Dendritic cell treated with granulocyte-macrophage colony-stimulating factor and Interleukin-4, amounts not matched to agents 40 ng/mL and 50 ng/mL, for 4 days (primary cell): ENCODE measurements at regions of chr7 and their contacts with region 1.

Region 1: DNA sequence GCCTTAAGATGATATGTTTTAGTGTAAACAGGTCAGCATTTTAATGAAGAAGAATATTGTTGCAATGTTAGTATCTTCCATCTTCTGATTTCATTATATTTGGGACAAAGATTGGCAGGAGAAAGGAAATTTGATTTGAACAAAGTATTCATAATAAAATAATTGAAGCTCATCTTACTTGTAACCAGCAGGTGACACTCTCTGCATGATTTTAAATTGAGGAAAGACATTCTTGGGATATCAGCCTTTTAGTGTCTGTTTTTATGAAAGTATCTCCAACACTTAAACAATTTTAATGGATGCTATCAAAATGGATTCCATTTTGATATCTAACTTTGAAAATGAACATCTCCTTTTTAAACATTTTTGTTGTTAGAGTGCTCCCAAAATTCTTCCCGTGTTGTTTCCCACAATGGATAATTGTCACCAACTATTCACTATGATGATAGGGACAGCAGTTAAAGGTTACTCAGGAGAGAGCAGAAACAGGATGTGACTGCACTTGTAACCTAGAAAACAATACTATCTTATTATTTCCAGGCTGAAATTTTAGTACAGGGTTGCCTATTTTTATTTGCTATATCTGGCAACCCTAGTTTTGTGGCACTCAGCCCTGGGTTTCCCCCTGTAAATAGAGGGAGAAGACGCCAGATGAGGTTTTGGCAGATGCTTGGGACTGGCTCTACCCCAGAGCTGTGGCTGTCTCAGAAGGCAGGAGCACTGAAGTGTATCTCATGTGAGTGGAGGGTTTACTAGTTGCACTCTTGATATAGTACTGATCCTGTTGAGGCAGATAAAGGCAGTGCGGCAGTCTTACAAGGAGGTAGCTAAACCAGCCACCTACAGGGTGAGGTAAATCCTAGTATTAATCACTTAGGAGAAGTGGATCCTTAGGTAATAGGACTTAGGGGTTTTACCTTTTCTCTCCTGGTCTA is 31.0 kb upstream of the ABCB4 start:
- H3K4me3 Mint-ChIP-seq: no peak overlapping the region
- H3K27ac Mint-ChIP-seq: no peak overlapping the region
- H3K4me1 Mint-ChIP-seq: peaks cover 5% of the 10 kb centered on the region
- H3K27me3 Mint-ChIP-seq: no peaks in the 10 kb centered on the region

Region 2: DNA sequence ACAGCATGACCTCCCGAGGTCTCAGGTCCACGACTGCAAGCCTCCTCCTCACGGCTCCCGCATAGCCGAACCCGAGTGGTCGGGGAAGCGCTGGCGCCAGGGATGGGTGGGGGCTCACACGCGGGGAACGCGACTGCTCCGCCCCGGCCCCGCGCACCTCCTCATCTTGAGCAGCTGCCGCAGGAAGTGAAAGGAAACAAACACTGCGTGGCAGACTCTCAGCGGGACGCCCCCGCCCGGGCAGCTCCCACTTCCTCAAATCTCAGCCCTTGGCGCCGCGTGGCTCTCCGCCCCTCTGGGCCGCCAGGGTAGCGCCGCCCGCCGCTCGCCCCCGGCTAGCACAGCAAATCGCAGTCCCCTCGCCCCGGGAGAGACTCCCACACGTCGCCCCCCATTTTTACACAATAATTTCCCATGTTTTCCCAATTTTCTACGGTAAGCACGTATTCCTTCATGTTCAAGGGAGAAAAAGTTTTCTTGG is 286.9 kb before region 1 on chr7 and contains the start of gene TMEM243:
- intact Hi-C with region 1: no loop called
- H3K4me3 Mint-ChIP-seq: peak within 1 kb of the TSS; percentile 90
- H3K27ac Mint-ChIP-seq: peak within 1 kb of the TSS; percentile 94
- H3K4me1 Mint-ChIP-seq: peaks cover 30% of the 10 kb centered on the region
- H3K27me3 Mint-ChIP-seq: peaks cover 11% of the 10 kb centered on the region

Region 3: GRCh38 chr7:88169717-88170320 is 663.3 kb after region 1 on chr7:
- intact Hi-C with region 1: loop called (anchors 2 kb)
- H3K4me3 Mint-ChIP-seq: no peak overlapping the region
- H3K27ac Mint-ChIP-seq: no peak overlapping the region
- H3K4me1 Mint-ChIP-seq: peaks cover 6% of the 10 kb centered on the region
- H3K27me3 Mint-ChIP-seq: no peaks in the 10 kb centered on the region